ENCODE measurements at regions of chr21 and their contacts with region 1.

Region 1: DNA sequence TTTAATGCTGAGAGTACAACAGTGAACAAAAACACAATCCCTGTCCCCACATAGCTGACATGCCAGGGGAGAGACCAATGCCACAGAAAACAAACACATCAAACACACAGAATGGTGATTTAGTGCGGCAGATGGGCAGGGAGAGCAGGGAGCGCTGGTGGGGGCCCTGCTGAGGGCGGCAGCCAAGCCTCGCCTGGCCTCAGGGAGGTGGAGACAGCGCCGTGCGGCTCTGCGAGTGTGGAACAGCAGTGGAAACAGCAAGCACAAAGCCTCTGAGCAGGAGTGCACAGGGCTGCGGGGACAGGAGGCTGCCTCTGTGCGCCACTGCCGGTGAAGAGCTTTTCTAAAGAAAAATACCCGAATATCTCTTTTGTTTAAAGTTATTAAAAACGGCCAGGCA is 17.0 kb downstream of the MCM3AP start:
- DNase-seq: no peak
- H3K4me3 ChIP-seq: no peak overlapping the region
- H3K27ac ChIP-seq: no peak overlapping the region
- H3K4me1 ChIP-seq: no peaks in the 10 kb centered on the region
- H3K27me3 ChIP-seq: no peaks in the 10 kb centered on the region
- CTCF ChIP-seq: no peak
- EP300 ChIP-seq: no peak
- POLR2A ChIP-seq: no peak
- RAD21 ChIP-seq: no peak

Region 2: DNA sequence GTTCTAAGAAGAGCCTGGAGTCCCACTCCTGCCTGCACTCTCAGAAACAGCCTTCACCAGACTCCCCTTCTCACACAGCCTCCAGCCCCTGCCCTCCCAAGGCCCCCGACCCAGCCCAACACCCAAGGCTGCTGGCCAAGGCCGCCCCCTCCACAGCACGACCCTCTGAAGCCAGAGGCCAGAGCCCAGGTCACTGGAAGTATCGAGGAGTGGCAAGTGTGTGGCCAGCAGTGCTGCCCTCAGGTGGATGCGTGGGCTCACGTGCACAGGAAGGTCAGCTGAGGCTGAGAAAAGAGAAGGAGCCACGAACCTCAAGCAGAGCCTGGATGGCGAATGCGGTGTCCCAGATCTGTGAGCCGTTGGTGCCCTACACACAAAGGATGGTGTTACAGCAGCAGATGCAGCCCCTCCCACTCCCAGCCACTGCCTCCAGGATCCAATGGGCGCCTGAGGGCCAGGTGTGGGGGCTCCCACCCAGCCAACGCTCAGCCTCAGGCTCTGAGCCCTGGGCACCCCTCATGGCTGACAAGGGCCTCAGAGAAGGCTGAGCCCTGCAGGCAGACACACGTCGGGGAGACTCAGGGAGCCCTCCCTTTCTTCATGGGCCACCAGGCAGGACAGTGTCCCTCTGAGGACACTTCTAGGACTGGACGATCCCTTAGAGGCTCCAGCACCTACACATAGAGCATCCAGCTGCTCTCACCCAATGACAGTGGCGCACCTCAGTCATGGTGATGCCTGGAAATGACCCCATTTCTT is 57.8 kb before region 1 on chr21:
- CTCF ChIA-PET with region 1: no interaction called
- POLR2A ChIA-PET with region 1: no interaction called
- DNase-seq: no peak
- H3K4me3 ChIP-seq: no peak overlapping the region
- H3K27ac ChIP-seq: no peak overlapping the region
- H3K4me1 ChIP-seq: no peaks in the 10 kb centered on the region
- H3K27me3 ChIP-seq: no peaks in the 10 kb centered on the region
- CTCF ChIP-seq: peak in 2 of 3 experiments; percentile 28 to 44; a peak in 3 of 4 replicates
- EP300 ChIP-seq: no peak
- POLR2A ChIP-seq: no peak
- RAD21 ChIP-seq: peak; percentile 10 to 33; a peak in 1 of 4 replicates

Region 3: GRCh38 chr21:46253610-46254124 is 14.7 kb before region 1 on chr21:
- CTCF ChIA-PET with region 1: no interaction called
- POLR2A ChIA-PET with region 1: interaction called, 10 read pairs
- DNase-seq: no peak
- H3K4me3 ChIP-seq: no peak overlapping the region
- H3K27ac ChIP-seq: no peak overlapping the region
- H3K4me1 ChIP-seq: no peaks in the 10 kb centered on the region
- H3K27me3 ChIP-seq: no peaks in the 10 kb centered on the region
- CTCF ChIP-seq: no peak
- EP300 ChIP-seq: no peak
- POLR2A ChIP-seq: no peak
- RAD21 ChIP-seq: no peak